Activated CD4-positive, alpha-beta T cell treated with anti-CD3 and anti-CD28 coated beads for 36 hours (primary cell): ENCODE measurements at regions of chr12 and their contacts with region 1.

Region 1: GRCh38 chr12:109880016-109880931 is at the start of gene GLTP:
- DNase-seq: peak; percentile 93
- ATAC-seq: peak; percentile 97
- H3K4me3 Mint-ChIP-seq: peak within 1 kb of the TSS; percentile 86
- H3K27ac Mint-ChIP-seq: peak within 1 kb of the TSS; percentile 88
- H3K4me1 Mint-ChIP-seq: peaks cover 36% of the 10 kb centered on the region
- H3K27me3 Mint-ChIP-seq: no peaks in the 10 kb centered on the region
- total RNA-seq, gene GLTP: 24.2 to 26.9 TPM

Region 2: DNA sequence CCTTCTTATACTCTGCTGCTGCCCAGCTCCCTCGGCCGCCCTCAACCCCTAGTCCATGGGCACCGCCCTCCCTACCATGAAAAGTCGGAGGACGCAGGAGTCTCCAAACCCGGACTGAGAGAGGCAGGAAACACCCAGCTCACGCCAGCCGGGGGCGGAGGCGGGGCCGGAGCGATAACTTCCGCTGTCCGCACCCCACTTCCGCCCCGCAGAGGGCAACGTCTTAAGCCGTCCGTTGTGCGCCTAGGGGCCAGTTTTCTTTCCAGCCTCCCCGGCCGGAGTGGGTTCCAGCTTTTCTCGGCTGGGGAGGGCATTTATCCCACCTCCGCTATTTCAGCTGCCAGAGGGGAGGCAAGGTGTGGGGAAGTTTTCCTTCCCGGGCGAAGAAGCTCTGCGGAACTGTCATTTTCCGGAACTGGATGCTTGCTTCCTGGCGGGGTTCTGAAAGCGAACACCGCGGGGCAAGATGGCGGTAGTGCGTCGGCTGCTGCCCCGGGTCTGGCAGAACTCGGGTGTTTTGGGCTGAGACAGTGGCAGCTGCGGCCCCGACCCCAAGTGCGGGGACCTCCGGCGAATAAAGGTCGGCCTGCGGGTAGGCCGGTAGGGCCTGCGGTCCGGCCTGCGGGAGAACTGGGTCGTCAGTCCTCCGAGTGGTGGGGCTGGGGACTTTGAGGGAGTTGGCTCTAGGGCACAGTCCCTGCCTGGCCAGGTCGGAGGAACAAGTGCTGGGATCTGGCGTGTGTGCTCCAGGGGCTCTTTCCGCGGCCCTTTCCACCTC is 402.9 kb before region 1 on chr12 and contains the starts of genes KCTD10 and UBE3B:
- CTCF ChIA-PET with region 1: no interaction called
- POLR2A ChIA-PET with region 1: no interaction called
- intact Hi-C with region 1: loop called in 1 of 2 experiments (anchors 1 kb)
- DNase-seq: peak; percentile 92
- ATAC-seq: peak; percentile 97
- H3K4me3 Mint-ChIP-seq: peak within 1 kb of the TSS; percentile 95
- H3K27ac Mint-ChIP-seq: peak within 1 kb of the TSS; percentile 99
- H3K4me1 Mint-ChIP-seq: peaks cover 43% of the 10 kb centered on the region
- H3K27me3 Mint-ChIP-seq: no peaks in the 10 kb centered on the region
- total RNA-seq, gene KCTD10: 42.0 to 46.3 TPM
- total RNA-seq, gene UBE3B: 25.7 to 27.2 TPM

Region 3: GRCh38 chr12:109713187-109713984 is 166.9 kb before region 1 on chr12 and contains the start of gene FAM222A:
- CTCF ChIA-PET with region 1: no interaction called
- POLR2A ChIA-PET with region 1: no interaction called
- intact Hi-C with region 1: loop called in 1 of 2 experiments (anchors 1 kb)
- DNase-seq: peak; percentile 97
- ATAC-seq: peak; percentile 95
- H3K4me3 Mint-ChIP-seq: peak within 1 kb of the TSS; percentile 56
- H3K27ac Mint-ChIP-seq: no peak within 1 kb of the TSS
- H3K4me1 Mint-ChIP-seq: peaks cover 4% of the 10 kb centered on the region
- H3K27me3 Mint-ChIP-seq: peaks cover 25% of the 10 kb centered on the region
- total RNA-seq, gene FAM222A: 0.39 to 0.53 TPM

Region 4: DNA sequence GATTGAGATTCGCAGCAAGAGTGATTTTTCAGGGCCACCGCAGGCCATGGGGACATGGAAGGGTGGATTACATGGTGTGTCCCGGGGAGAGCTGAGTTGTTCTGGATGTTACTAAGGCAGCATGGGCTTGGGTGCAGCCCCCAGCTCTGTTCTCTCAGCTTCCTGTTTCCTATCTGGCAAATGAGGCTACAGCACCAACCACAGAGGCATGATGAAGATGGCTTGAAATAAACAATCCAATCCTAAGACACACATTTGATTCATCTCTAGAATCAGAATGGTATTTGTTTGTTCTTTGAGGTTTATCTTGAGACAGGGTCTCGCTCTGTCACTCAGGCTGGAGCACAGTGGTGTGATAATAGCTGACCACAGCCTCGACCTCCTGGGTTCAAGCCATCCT is 21.5 kb before region 1 on chr12:
- CTCF ChIA-PET with region 1: interaction called, 11 read pairs
- POLR2A ChIA-PET with region 1: interaction called, 5 read pairs
- intact Hi-C with region 1: loop called (anchors 1 kb)
- DNase-seq: no peak
- ATAC-seq: no peak
- H3K4me3 Mint-ChIP-seq: no peak overlapping the region
- H3K27ac Mint-ChIP-seq: no peak overlapping the region
- H3K4me1 Mint-ChIP-seq: peaks cover 3% of the 10 kb centered on the region
- H3K27me3 Mint-ChIP-seq: no peaks in the 10 kb centered on the region

Region 5: GRCh38 chr12:110124184-110124995 is 244.1 kb after region 1 on chr12 and contains the start of gene IFT81:
- CTCF ChIA-PET with region 1: no interaction called
- POLR2A ChIA-PET with region 1: no interaction called
- intact Hi-C with region 1: loop called in 1 of 2 experiments (anchors 1 kb)
- DNase-seq: peak; percentile 98
- ATAC-seq: peak; percentile 91
- H3K4me3 Mint-ChIP-seq: peak within 1 kb of the TSS; percentile 83
- H3K27ac Mint-ChIP-seq: peak within 1 kb of the TSS; percentile 81
- H3K4me1 Mint-ChIP-seq: peaks cover 7% of the 10 kb centered on the region
- H3K27me3 Mint-ChIP-seq: peaks cover 4% of the 10 kb centered on the region
- total RNA-seq, gene IFT81: 3.5 TPM